ENCODE measurements at regions of chr4 and their contacts with region 1.

Region 1: DNA sequence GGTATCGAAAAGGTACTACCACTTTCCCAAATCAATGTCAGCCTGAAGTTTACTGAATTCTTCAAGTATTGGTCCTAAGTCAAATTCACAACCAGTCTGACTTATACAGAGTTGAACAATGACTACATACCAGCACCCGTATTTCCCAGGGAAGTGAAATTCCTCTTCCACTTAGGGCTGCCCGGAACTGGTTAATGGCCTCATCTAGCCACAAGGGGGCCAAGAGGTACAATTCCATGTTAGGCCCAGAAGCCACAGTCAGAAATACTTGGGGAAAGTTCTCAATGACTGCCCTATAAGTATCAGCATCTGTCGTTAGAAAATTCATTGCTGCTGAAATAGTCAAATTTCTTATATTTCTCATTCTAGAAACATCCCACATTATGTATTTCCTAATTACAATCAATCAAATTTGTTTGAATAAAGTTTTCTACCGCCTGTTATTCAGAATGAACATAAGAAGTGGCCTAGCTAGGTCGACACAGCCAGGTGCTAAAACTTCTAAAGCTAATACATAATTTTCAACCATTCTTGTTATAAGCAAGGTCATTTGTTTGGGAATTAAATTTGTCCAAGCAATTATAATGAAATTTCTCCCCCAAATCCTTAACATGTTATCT is 5.7 kb upstream of the PCDH7 start:
- DNase-seq: no peak
- H3K4me3 Mint-ChIP-seq: no peak overlapping the region
- H3K27ac Mint-ChIP-seq: no peak overlapping the region
- H3K4me1 Mint-ChIP-seq: peaks cover 27% of the 10 kb centered on the region
- H3K27me3 Mint-ChIP-seq: peaks cover 45% of the 10 kb centered on the region

Region 2: GRCh38 chr4:30450474-30450873 is 264.0 kb before region 1 on chr4:
- CTCF ChIA-PET with region 1: no interaction called
- intact Hi-C with region 1: no loop called
- DNase-seq: no peak
- H3K4me3 Mint-ChIP-seq: no peak overlapping the region
- H3K27ac Mint-ChIP-seq: no peak overlapping the region
- H3K4me1 Mint-ChIP-seq: no peaks in the 10 kb centered on the region
- H3K27me3 Mint-ChIP-seq: no peaks in the 10 kb centered on the region

Region 3: DNA sequence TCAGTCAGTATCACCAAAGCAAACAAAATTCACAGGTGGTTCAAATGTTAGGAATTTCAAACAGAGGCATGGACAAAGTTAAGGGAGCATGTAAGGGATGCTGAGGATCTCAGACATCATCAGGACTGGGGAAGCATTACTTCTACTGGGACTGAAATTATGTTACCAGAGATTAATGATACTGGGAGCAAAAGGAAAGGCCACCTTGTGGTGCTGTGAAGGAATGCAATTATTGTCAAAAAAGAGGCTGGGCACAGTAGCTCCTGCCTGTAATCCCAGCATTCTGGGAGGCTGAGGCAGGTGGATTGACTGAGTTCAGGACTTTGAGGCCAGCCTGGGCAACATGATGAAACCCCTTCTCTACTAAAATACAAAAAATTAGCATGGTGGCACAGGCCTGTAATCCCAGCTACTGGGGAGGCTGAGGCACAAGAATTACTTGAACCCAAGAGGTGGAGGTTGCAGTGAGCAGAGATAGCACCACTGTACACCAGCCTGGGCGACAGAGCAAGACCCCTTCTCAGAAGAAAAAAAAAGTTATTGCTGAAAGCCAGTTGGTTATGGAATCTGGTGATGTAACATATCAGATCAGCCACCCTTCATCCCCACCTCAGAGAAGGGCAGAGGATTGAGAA is 959.9 kb after region 1 on chr4:
- CTCF ChIA-PET with region 1: no interaction called
- intact Hi-C with region 1: loop called (anchors 10 kb)
- DNase-seq: no peak
- H3K4me3 Mint-ChIP-seq: no peak overlapping the region
- H3K27ac Mint-ChIP-seq: no peak overlapping the region
- H3K4me1 Mint-ChIP-seq: no peaks in the 10 kb centered on the region
- H3K27me3 Mint-ChIP-seq: no peaks in the 10 kb centered on the region

Measured in activated naive CD4-positive, alpha-beta T cell treated with anti-CD3 and anti-CD28 coated beads for 36 hours (primary cell).